Ascending aorta (tissue), 2 donors: ENCODE measurements at regions of chr6 and their contacts with region 1.

Region 1: DNA sequence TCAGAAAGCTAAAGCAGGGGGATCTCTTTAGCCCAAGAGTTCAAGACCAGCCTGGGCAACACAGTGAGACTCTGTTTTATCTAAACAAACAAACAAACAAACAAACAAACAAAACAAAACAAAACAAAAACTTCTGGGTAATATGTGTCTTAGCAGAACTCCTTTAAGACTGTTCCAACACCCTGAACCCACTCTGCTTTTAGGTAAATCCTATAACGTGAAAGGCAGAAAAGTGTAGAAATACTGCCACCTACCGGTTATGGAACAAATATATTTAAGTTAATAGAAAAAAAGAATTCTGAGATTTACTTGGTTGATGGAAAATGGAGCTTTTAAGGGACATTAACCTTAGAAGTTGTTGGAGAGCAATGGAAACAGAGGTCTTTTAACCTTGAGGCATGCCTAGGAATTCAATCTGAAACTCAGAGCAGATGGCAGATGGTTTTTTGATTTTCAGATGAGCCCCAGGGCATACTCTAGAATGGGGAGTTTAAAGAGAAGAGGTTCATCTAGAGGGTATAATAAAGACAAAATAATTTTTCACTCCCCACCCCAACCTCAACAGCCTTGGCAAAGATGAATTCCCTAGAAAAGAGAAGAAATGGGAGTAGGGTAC is 38.5 kb downstream of the SOD2 start:
- DNase-seq: no peak
- H3K4me3 ChIP-seq: no peak overlapping the region
- H3K27ac ChIP-seq: no peak overlapping the region
- H3K4me1 ChIP-seq: no peaks in the 10 kb centered on the region
- H3K27me3 ChIP-seq: no peaks in the 10 kb centered on the region
- CTCF ChIP-seq: peak; percentile 39 to 73 (median 56)

Region 2: DNA sequence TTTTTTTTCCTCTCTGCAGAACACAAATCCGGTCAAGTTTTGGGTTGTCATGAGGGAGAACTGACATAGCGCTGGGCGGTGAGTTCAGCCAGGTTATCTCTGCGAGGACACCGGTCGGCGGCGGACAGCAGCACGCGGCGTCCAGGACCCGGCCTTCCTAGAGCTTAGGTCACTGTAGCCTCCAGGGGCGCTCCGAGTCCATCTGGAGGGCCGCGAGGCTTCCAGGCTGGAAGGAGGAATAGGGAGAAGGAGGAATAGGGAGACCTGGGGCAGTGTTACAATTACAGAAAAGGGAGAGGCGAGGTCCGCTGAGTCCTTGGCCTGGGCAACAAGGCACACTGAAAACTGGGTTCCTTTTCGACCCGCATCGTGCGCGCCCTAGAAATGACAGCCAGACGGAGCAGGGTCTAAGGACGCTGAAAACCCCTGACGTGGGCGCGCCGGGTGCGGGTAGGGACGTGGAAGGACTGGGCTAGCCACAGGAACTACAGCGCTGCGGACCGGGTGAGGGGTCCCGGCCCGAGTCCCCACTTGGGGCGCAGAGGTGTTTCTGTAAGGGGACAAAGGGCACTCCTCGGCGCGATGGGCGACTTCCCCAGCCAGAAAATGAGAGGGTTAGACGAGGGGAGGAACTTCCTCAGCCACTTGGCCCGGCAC is 485.9 kb before region 1 on chr6:
- intact Hi-C with region 1: loop called (anchors 1 kb)
- DNase-seq: peak in 1 of 2 donors; percentile 69
- H3K4me3 ChIP-seq: peak overlapping the region; percentile 46 to 64
- H3K27ac ChIP-seq: peak overlapping the region; percentile 23 to 57
- H3K4me1 ChIP-seq: peaks cover 0 to 12% of the 10 kb centered on the region in 2 donors
- H3K27me3 ChIP-seq: no peaks in the 10 kb centered on the region
- CTCF ChIP-seq: peak in 2 of 3 experiments; percentile 38 to 60

Region 3: DNA sequence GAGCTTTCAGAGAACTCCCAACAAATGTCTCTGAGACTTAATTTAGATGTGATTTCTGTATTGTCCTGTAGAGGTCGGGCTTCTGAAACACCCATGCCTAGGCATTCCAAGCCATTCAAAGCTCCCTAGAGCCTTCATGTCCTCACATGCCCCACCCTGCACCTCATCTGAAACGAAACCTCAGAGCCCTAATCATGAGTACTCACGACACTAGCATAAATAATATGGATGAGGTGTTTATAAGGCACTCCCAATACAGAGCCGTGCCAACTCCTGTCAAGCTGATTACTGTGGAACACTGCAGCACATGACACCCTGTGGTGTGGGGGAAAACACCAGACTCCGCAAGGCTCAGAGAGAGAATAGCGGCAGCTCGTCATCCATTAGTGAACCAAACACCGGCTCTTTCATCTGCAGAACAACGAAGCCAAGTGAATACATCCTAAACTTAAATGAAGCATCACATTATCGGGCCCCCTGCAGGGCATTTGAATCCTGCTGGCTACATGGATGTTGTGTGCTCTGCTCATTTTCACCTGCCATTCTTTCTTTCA is 401.6 kb before region 1 on chr6:
- intact Hi-C with region 1: loop called (anchors 10 kb)
- DNase-seq: no peak
- H3K4me3 ChIP-seq: no peak overlapping the region
- H3K27ac ChIP-seq: no peak overlapping the region
- H3K4me1 ChIP-seq: peaks cover 5 to 9% of the 10 kb centered on the region in 2 donors
- H3K27me3 ChIP-seq: no peaks in the 10 kb centered on the region
- CTCF ChIP-seq: peak in 2 of 3 experiments; percentile 51 to 64

Region 4: GRCh38 chr6:159463119-159463829 is 191.3 kb before region 1 on chr6:
- intact Hi-C with region 1: loop called (anchors 10 kb)
- DNase-seq: no peak
- H3K4me3 ChIP-seq: no peak overlapping the region
- H3K27ac ChIP-seq: no peak overlapping the region
- H3K4me1 ChIP-seq: no peaks in the 10 kb centered on the region
- H3K27me3 ChIP-seq: no peaks in the 10 kb centered on the region
- CTCF ChIP-seq: peak in 1 of 3 experiments; percentile 44